Left ventricle myocardium inferior (tissue), 1 donor: ENCODE measurements at regions of chr7 and their contacts with region 1.

Region 1: GRCh38 chr7:10412422-10413019 is 561.2 kb upstream of the PHF14 start:
- DNase-seq: no peak
- H3K4me3 ChIP-seq: no peak overlapping the region
- H3K27ac ChIP-seq: no peak overlapping the region
- H3K4me1 ChIP-seq: no peaks in the 10 kb centered on the region
- H3K27me3 ChIP-seq: no peaks in the 10 kb centered on the region
- CTCF ChIP-seq: peak; percentile 77

Region 2: GRCh38 chr7:10022957-10023356 is 389.6 kb before region 1 on chr7:
- intact Hi-C with region 1: loop called (anchors 5 kb)
- DNase-seq: no peak
- H3K4me3 ChIP-seq: no peak overlapping the region
- H3K27ac ChIP-seq: no peak overlapping the region
- H3K4me1 ChIP-seq: no peaks in the 10 kb centered on the region
- H3K27me3 ChIP-seq: no peaks in the 10 kb centered on the region
- CTCF ChIP-seq: peak; percentile 62

Region 3: DNA sequence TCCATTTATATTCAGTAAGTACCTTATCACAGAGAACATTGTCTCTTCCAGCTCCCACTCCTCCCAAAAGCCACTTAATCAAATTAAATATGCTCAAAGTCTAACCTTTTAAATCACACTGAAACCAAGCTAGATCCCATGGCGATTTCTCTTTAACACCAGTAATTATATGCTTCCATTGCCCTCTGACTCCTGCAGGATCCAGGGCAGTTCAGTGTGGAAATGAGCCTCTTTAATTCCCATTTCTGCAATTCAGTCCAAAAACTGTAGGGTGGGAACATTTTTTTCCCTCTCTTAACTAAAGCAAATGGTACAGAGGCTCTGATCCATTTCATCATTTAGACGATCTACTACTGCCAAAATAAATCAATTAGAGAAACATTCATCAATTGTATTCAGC is 311.2 kb before region 1 on chr7:
- intact Hi-C with region 1: no loop called
- DNase-seq: no peak
- H3K4me3 ChIP-seq: no peak overlapping the region
- H3K27ac ChIP-seq: no peak overlapping the region
- H3K4me1 ChIP-seq: no peaks in the 10 kb centered on the region
- H3K27me3 ChIP-seq: no peaks in the 10 kb centered on the region
- CTCF ChIP-seq: no peak